ENCODE measurements at regions of chr12 and their contacts with region 1.

Region 1: GRCh38 chr12:13196130-13196921 is at the start of gene EMP1:
- DNase-seq: peak; percentile 96 to 99
- H3K4me3 ChIP-seq: peak within 1 kb of the TSS; percentile 55 to 57
- H3K27ac ChIP-seq: peak within 1 kb of the TSS; percentile 79 to 83
- H3K4me1 ChIP-seq: peaks cover 0 to 21% (median 12%) of the 10 kb centered on the region in 4 donors
- H3K27me3 ChIP-seq: no peaks in the 10 kb centered on the region
- CTCF ChIP-seq: no peak

Region 2: DNA sequence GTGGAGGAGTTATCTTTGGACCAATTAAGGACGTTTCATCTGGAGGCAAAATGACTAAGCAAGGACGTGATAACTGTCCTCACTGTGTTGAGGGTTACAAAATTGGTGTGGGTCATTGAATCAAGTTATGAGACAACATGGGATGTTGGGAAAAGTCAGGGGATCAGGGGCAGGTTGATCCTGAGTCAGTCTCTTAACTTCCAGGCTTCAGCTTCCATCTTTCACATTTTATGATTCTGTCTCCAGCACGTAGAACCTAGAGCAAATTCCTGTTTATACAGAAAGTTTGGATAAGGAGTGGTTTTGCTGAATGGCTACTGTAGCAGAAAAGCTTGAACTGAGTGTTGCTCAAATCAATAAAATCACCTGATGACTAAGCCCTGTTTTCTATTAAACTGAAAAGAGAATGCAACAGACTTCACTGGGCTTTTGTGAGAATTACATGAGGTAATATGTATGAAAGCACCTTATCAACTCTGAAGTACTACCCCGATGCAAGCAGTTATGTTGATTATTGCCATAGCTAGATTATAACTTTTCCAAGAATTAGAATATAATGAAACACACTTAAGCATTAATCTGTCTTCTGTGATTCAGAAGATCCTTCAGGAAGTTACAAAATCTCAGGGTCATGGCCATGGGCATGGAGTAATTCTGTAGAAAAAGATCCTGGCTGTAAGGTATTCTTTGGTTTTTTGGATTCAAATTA is 1362.1 kb before region 1 on chr12:
- intact Hi-C with region 1: loop called (anchors 5 kb)
- DNase-seq: no peak
- H3K4me3 ChIP-seq: no peak overlapping the region
- H3K27ac ChIP-seq: peak overlapping the region; percentile 18 to 67
- H3K4me1 ChIP-seq: peaks cover 0 to 99% (median 76%) of the 10 kb centered on the region in 4 donors
- H3K27me3 ChIP-seq: no peaks in the 10 kb centered on the region
- CTCF ChIP-seq: no peak

Region 3: GRCh38 chr12:13100882-13101769 is 95.2 kb before region 1 on chr12:
- intact Hi-C with region 1: loop called (anchors 5 kb)
- DNase-seq: peak; percentile 94 to 95
- H3K4me3 ChIP-seq: peak overlapping the region; percentile 60 to 63
- H3K27ac ChIP-seq: peak overlapping the region; percentile 92 to 98
- H3K4me1 ChIP-seq: peaks cover 0 to 55% (median 21%) of the 10 kb centered on the region in 4 donors
- H3K27me3 ChIP-seq: no peaks in the 10 kb centered on the region
- CTCF ChIP-seq: no peak

Measured in tibial artery (tissue), 4 donors.